ENCODE measurements at regions of chr10 and their contacts with region 1.

Region 1: DNA sequence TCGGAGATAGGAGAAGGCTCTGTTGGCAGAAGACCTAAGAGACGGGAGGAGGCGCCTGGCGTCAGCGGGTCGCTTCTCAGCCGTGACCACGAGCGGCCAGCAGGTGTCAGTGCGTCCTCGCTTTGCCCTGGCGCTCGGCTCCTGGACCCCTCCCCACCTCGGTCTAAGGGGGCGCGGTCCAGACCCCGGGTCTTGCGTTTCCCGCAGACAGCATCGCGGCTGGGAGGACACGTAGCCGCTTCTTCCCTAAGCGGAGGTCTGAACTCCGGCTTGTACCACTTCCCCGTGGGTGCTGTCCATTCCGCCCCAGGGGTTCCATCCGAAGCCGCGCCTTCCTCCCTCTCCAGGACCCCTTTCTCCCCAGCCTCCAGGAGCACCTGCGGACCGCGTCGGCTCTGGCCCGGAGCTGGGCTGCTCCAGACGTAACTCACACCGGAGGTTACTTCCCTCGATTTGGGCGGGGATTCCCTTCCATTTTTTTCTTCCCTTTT is 593 bp upstream of the ADRA2A start:
- DNase-seq: peak; percentile 79 to 90 (median 86)
- H3K4me3 ChIP-seq: peak overlapping the region; percentile 51
- H3K27ac ChIP-seq: peak overlapping the region; percentile 66 to 81
- H3K4me1 ChIP-seq: peaks cover 13% of the 10 kb centered on the region
- H3K27me3 ChIP-seq: no peaks in the 10 kb centered on the region
- CTCF ChIP-seq: peak; percentile 87 to 92 (median 88)
- EP300 ChIP-seq: no peak
- POLR2A ChIP-seq: no peak

Region 2: DNA sequence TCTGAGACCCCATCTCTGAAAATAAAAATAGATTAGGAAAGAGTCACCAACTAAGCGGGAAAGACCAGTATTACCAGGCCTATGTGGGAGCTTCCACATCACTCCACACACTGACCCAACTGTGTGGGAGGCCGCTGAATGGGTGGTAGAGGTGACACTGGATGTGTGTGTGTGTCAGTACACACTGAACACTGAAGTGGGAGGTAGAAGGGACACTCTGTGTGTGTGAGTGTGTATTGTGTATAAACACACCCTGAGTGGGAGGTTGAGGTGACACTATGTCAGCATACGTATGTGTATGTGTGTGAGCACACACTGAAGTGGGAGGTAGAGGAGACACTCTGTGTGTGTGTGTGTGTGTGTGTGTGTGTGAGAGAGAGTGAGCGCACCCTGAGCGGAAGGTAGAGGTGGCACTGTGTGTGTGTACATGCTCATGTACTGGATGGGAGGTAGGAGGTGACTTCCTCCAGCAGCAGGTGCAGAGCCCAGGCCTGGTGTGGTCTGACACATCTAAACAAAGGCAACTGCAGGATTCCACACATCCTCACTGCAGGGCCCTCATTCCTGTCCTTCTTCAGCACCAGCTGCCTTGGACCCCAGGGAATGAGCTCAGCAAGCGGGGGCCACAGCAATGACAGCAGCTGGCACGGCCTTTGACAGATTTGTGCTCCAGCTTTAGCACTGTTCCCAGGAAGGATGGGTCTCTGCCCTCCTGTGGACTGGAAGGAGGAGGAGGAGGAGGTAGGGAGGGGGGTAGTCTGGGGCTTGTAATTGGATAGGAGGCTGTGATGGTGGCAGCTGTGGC is 458.6 kb before region 1 on chr10:
- intact Hi-C with region 1: no loop called
- DNase-seq: no peak
- H3K4me3 ChIP-seq: no peak overlapping the region
- H3K27ac ChIP-seq: no peak overlapping the region
- H3K4me1 ChIP-seq: no peaks in the 10 kb centered on the region
- H3K27me3 ChIP-seq: no peaks in the 10 kb centered on the region
- CTCF ChIP-seq: no peak
- EP300 ChIP-seq: no peak
- POLR2A ChIP-seq: no peak

Region 3: GRCh38 chr10:110803830-110804338 is 272.4 kb before region 1 on chr10:
- intact Hi-C with region 1: loop called in 1 of 4 experiments (anchors 10 kb)
- DNase-seq: peak; percentile 64 to 79 (median 72)
- H3K4me3 ChIP-seq: no peak overlapping the region
- H3K27ac ChIP-seq: peak overlapping the region in 1 of 2 donors; percentile 5
- H3K4me1 ChIP-seq: peaks cover 5% of the 10 kb centered on the region
- H3K27me3 ChIP-seq: no peaks in the 10 kb centered on the region
- CTCF ChIP-seq: peak; percentile 62 to 81 (median 70)
- EP300 ChIP-seq: no peak
- POLR2A ChIP-seq: no peak

Region 4: DNA sequence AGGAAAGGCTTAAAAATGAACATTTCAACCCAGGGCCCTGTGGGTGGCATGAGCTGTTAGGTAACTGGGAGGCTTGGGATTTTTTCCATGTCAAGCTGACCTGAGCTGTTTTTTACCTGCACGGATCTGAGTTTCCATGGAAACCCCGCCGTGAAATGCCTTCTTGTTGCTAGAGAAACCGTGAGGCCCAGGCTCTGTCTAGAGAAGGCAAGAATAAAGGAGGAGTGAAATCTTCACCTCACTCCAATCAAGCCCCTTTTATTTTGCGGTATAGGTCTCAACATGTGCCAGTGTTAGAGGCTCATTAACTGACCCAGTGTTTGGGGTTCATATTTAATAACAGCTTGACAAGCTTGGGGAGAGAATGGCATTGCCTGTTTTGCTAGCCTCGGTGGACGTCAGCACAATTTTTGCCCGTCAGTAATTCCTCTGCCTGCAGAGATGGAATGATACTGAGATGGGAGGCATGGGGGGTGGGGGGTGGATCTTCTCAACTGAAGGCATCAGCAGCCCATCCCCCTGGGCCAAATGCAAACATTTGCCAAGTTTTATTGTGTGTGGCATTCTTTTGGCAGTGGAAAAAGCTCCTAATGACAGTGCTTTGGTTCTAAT is 253.4 kb before region 1 on chr10:
- intact Hi-C with region 1: no loop called
- DNase-seq: no peak
- H3K4me3 ChIP-seq: no peak overlapping the region
- H3K27ac ChIP-seq: peak overlapping the region in 1 of 2 donors; percentile 83
- H3K4me1 ChIP-seq: peaks cover 38% of the 10 kb centered on the region
- H3K27me3 ChIP-seq: no peaks in the 10 kb centered on the region
- CTCF ChIP-seq: no peak
- EP300 ChIP-seq: no peak
- POLR2A ChIP-seq: no peak

Region 5: DNA sequence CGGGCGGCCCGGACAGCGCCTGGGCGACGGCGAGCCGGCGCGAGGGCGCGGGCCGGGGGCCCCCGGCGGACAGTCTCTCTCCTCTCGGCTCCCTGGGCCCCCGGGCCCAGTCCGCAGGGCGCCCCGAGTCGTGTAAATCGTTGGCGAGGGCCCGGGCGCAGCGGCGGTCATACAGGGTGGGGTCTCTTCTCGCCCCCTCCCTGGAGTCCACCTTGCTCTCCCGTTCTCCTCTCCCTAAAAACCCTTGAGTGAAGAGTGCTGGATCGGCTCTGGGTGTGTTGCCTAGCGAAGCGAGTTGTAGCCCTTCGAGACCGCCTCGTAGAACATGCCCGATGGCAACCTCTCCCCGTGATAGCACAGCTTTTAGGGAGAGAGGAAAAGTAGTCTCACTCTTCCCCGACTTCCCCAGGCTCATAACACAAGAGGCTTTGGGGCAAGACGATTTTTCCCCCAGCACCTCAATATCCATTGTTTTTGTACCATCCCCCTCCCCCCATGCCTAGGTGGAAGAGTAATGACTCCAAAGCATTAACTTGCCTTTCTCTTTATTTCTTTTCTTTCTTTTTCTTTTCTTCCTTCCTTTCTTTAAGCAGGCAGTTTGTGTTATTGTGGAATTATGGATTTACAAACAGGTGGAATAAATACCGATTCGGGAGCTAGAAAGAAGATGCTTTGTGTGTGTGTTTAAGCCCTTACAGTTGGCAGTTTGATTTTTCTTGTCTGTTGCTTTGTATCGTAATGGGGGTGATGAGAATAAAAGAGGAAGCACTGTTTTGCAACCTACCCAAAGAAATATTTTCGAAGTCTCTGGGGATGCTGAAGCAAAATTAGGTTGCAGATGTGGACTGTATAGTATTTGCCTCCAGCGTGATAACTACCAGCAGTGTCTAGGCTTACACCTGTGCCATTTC is 156.0 kb before region 1 on chr10:
- intact Hi-C with region 1: loop called in 1 of 4 experiments (anchors 10 kb)
- DNase-seq: peak; percentile 35 to 64 (median 64)
- H3K4me3 ChIP-seq: peak overlapping the region; percentile 66
- H3K27ac ChIP-seq: peak overlapping the region; percentile 86 to 92
- H3K4me1 ChIP-seq: no peaks in the 10 kb centered on the region
- H3K27me3 ChIP-seq: no peaks in the 10 kb centered on the region
- CTCF ChIP-seq: no peak
- EP300 ChIP-seq: no peak
- POLR2A ChIP-seq: no peak

Region 6: GRCh38 chr10:111086574-111086973 is 10.3 kb after region 1 on chr10:
- intact Hi-C with region 1: no loop called
- DNase-seq: no peak
- H3K4me3 ChIP-seq: no peak overlapping the region
- H3K27ac ChIP-seq: no peak overlapping the region
- H3K4me1 ChIP-seq: peaks cover 8% of the 10 kb centered on the region
- H3K27me3 ChIP-seq: no peaks in the 10 kb centered on the region
- CTCF ChIP-seq: no peak
- EP300 ChIP-seq: no peak
- POLR2A ChIP-seq: no peak

Region 7: GRCh38 chr10:111265341-111265740 is 189.1 kb after region 1 on chr10:
- intact Hi-C with region 1: loop called in 1 of 4 experiments (anchors 5 kb)
- DNase-seq: no peak
- H3K4me3 ChIP-seq: no peak overlapping the region
- H3K27ac ChIP-seq: no peak overlapping the region
- H3K4me1 ChIP-seq: peaks cover 3% of the 10 kb centered on the region
- H3K27me3 ChIP-seq: no peaks in the 10 kb centered on the region
- CTCF ChIP-seq: no peak
- EP300 ChIP-seq: no peak
- POLR2A ChIP-seq: no peak

Region 8: DNA sequence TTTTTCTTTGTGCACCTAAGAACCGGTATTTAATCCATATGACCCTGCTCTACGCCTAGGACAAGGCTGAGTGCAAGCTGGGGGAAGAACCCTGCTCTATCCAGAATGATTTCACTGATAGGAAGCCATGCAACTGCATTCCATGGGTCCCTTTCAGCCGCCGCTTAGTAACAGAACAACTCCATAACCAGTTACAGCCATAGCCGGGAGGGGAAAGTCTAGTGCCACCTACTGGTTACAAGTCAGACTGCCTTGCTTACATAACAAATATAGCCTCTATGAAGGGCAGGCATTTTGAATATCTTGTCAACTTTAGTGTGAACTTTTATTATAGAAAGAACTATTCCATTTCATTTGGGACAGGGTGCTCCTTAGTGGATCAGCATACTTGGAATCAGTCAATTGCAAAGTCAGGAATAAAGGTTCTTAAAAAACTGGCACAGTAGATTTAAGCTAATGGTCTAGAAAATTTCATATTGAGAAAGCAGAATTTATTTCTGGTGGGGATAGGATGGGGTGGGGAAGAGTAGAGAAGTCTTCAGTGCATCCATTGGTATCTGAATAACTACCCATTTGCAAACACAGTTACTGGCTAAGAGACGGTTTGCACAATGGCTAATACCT is 522.3 kb after region 1 on chr10:
- intact Hi-C with region 1: loop called in 1 of 4 experiments (anchors 5 kb)
- DNase-seq: peak; percentile 10 to 57 (median 34)
- H3K4me3 ChIP-seq: no peak overlapping the region
- H3K27ac ChIP-seq: no peak overlapping the region
- H3K4me1 ChIP-seq: no peaks in the 10 kb centered on the region
- H3K27me3 ChIP-seq: no peaks in the 10 kb centered on the region
- CTCF ChIP-seq: peak; percentile 41 to 52 (median 44)
- EP300 ChIP-seq: no peak
- POLR2A ChIP-seq: no peak

Region 9: DNA sequence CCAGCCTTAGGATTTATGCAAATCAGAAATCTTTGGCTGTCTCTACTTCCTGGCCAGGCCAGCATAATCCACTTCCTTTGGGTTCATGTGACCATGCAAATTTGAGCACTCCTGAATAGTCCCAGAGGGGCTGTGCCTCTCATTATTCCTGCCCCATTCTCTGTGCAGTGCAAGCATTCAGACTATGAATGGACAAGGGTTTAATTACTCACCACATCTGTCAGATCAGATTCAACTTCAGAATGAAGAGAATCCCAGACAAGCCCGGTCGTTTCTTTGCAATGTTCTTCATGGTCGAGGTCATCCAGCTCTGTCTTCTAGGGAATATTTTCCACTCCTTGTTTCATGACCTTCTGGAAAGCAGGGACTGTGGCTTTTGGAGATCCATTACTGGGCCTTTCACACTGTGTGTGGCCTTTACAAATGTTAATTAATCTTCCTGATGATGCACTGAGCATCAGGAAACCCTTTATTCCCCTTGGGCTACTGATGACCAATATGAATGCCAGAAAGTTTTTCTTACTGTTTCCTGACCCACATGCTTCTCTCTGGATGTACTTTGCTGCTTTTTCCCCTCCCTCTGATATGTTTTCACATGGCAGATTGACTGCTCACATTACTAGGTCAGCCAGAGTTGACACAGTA is 1656.2 kb after region 1 on chr10:
- intact Hi-C with region 1: no loop called
- DNase-seq: no peak
- H3K4me3 ChIP-seq: no peak overlapping the region
- H3K27ac ChIP-seq: no peak overlapping the region
- H3K4me1 ChIP-seq: peaks cover 4% of the 10 kb centered on the region
- H3K27me3 ChIP-seq: no peaks in the 10 kb centered on the region
- CTCF ChIP-seq: no peak
- EP300 ChIP-seq: no peak
- POLR2A ChIP-seq: no peak

Measured in ovary (tissue), 10 donors.